Posterior vena cava (tissue), 2 donors: ENCODE measurements at regions of chr1 and their contacts with region 1.

Region 1: GRCh38 chr1:16300436-16300835 is 51.8 kb downstream of the FBXO42 start:
- DNase-seq: no peak

Region 2: DNA sequence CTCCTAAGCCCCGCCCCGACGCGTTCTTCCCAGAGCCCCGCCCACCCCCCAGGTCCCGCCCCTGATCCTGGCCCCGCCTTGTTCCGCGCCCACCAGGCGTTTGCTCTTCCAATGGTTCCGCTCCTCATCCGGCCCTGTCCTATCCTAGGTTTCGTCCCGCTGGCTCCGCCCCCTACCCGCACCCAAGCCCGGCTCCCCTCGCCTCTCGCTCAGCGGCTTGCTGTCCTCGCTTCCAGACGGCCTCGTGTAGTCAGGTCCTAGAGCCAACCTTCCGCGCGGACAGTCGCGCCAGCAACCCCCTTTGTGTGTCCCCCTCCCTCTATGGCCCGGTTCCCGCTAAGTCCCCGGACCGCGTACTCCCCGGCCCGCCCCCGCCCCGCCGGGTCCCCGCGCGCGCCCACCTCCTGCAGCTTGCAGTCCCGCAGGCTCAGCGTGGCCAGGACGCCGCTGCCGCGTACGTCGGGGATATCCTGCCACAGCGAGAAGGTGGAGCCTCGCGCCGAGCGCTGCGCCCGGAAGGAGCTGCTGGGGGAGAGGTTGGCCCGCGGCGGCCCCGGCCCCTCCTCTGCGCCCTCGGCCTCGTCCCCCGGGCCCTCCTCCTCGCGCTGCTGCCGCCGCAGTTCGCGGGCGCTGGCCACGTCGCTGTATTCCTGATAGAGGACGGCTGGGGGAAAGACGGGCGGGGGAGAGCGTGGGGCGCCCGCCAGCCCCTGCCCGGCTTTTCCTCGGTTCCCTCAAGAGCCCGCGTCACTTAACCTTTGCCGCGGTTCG is 93.7 kb before region 1 on chr1:
- intact Hi-C with region 1: no loop called
- DNase-seq: peak; percentile 99

Region 3: DNA sequence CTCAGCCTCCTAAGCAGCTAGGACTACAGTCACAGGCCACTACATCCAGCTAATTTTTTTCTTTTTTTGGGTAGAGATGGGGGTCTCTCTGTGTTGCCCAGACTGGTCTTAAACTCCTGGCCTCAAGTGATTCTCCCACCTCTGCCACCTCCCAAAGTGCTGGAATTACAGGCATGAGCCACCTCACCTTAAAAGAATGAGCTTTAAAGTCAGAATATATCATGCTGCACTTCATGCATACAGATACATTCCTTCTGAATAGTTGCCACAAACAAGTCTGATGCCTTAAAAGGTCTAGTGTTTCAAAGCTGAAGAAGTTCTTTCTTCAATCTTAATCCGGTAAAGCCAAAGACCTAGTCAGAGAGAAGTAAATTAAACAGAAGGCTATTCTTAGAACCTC is 39.6 kb before region 1 on chr1:
- intact Hi-C with region 1: loop called in 1 of 2 experiments (anchors 5 kb)
- DNase-seq: no peak